Prostate gland (tissue), 2 donors: ENCODE measurements at regions of chr19 and their contacts with region 1.

Region 1: GRCh38 chr19:2983351-2984195 is 6.2 kb downstream of the TLE6 start:
- DNase-seq: peak; percentile 55
- H3K4me3 ChIP-seq: peak overlapping the region; percentile 15 to 22
- H3K27ac ChIP-seq: peak overlapping the region; percentile 47 to 76
- H3K4me1 ChIP-seq: no peaks in the 10 kb centered on the region
- H3K27me3 ChIP-seq: no peaks in the 10 kb centered on the region
- CTCF ChIP-seq: no peak
- POLR2A ChIP-seq: no peak

Region 2: GRCh38 chr19:2944775-2945574 is 38.6 kb before region 1 on chr19 and contains the start of gene ZNF77:
- intact Hi-C with region 1: no loop called
- DNase-seq: peak; percentile 99
- H3K4me3 ChIP-seq: peak within 1 kb of the TSS; percentile 87 to 96
- H3K27ac ChIP-seq: peak within 1 kb of the TSS; percentile 87 to 92
- H3K4me1 ChIP-seq: no peaks in the 10 kb centered on the region
- H3K27me3 ChIP-seq: no peaks in the 10 kb centered on the region
- CTCF ChIP-seq: peak in 3 of 4 experiments; percentile 15 to 67 (median 55)
- POLR2A ChIP-seq: peak; percentile 47
- total RNA-seq, gene ZNF77: 2.8 to 6.6 TPM

Region 3: GRCh38 chr19:3035542-3036118 is 52.1 kb after region 1 on chr19:
- intact Hi-C with region 1: loop called (anchors 5 kb)
- DNase-seq: peak; percentile 100
- H3K4me3 ChIP-seq: peak overlapping the region; percentile 30 to 44
- H3K27ac ChIP-seq: peak overlapping the region; percentile 82 to 94
- H3K4me1 ChIP-seq: peaks cover 8% of the 10 kb centered on the region
- H3K27me3 ChIP-seq: no peaks in the 10 kb centered on the region
- CTCF ChIP-seq: peak in 2 of 4 experiments; percentile 21 to 47
- POLR2A ChIP-seq: peak; percentile 78